ENCODE measurements at regions of chr11 and their contacts with region 1.

Region 1: DNA sequence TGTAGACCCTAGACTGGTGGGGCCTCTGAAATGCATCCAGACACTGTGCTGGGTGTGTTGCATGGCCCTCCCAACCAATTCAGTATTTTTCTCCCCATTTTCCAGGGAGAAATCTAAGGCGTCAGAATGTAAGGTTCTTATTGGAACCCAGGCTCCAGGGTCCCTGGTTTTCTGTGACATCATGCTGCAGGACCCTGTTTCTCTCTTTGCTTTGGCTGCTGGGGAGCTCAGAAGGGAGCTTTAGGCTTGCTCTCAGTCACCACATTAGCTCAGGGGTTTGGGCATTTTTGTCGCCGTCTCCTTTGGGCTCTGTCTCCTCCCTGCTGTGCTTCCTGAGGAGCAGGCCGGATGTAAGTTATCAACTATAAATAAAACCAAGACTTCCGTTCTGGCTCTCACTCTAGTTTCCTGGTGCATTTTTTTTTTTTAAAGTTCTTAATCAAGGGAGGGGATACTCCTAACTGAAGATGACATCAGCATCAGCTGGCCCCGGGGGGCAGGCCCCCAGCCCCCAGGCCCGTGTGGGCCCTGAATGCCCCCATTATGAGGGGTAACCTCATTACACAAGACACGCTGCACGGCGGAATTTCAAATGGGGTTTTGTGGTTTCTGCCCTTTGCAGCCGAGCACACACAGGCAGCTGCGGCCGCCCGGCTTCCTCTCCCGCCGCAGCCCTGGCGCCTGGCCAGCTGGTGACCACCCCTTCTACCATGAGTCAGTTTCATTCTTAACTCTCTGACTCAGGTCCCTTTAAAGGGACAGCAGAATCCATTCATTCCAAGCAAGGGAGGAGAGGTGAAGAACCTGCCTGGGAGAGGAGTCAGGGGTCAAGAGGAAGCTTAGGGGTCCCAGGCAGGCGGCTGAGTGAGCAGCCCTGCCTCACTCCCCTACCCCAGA is 3.2 kb downstream of the MYEOV start:
- DNase-seq: peak; percentile 89
- CTCF ChIP-seq: no peak

Region 2: GRCh38 chr11:68839054-68839865 is 457.9 kb before region 1 on chr11:
- in situ Hi-C with region 1: no loop called
- DNase-seq: peak; percentile 92
- CTCF ChIP-seq: no peak

Region 3: GRCh38 chr11:69642913-69643632 is 345.9 kb after region 1 on chr11:
- in situ Hi-C with region 1: loop called (anchors 25 kb)
- DNase-seq: peak; percentile 90
- CTCF ChIP-seq: peak; percentile 97

Measured in GM13976 (cell line).